ENCODE measurements at regions of chr6 and their contacts with region 1.

Region 1: GRCh38 chr6:138001750-138002349 is 105.4 kb downstream of the PERP start:
- DNase-seq: peak; percentile 48 to 74 (median 58)
- ATAC-seq: peak; percentile 60
- H3K4me3 ChIP-seq: no peak overlapping the region
- H3K27ac ChIP-seq: no peak overlapping the region
- H3K4me1 ChIP-seq: no peaks in the 10 kb centered on the region
- H3K27me3 ChIP-seq: peaks cover 4 to 7% of the 10 kb centered on the region in 2 experiments; a peak in 2 of 5 replicates
- CTCF ChIP-seq: peak; percentile 82 to 94 (median 86)
- EP300 ChIP-seq: no peak
- POLR2A ChIP-seq: no peak
- RAD21 ChIP-seq: peak; percentile 77 to 84

Region 2: GRCh38 chr6:137497721-137498463 is 504.0 kb before region 1 on chr6:
- CTCF ChIA-PET with region 1: no interaction called
- POLR2A ChIA-PET with region 1: no interaction called
- in situ Hi-C with region 1: no loop called
- intact Hi-C with region 1: loop called (anchors 10 kb)
- DNase-seq: no peak
- ATAC-seq: no peak
- H3K4me3 ChIP-seq: no peak overlapping the region
- H3K27ac ChIP-seq: no peak overlapping the region
- H3K4me1 ChIP-seq: peaks cover 0 to 10% of the 10 kb centered on the region in 2 experiments; a peak in 1 of 5 replicates
- H3K27me3 ChIP-seq: peaks cover 47 to 54% of the 10 kb centered on the region in 2 experiments
- CTCF ChIP-seq: no peak
- EP300 ChIP-seq: no peak
- POLR2A ChIP-seq: no peak
- RAD21 ChIP-seq: no peak

Region 3: GRCh38 chr6:137661601-137662000 is 340.2 kb before region 1 on chr6:
- CTCF ChIA-PET with region 1: no interaction called
- POLR2A ChIA-PET with region 1: interaction called, 3 read pairs
- in situ Hi-C with region 1: no loop called
- intact Hi-C with region 1: loop called (anchors 1 kb)
- DNase-seq: peak; percentile 16 to 35 (median 20)
- ATAC-seq: peak; percentile 65; the same call in 2 of the 3 replicates
- H3K4me3 ChIP-seq: no peak overlapping the region
- H3K27ac ChIP-seq: no peak overlapping the region
- H3K4me1 ChIP-seq: no peaks in the 10 kb centered on the region
- H3K27me3 ChIP-seq: peaks cover 0 to 5% of the 10 kb centered on the region in 2 experiments; a peak in 1 of 5 replicates
- CTCF ChIP-seq: peak; percentile 39 to 49 (median 41); a peak in 4 of 6 replicates
- EP300 ChIP-seq: no peak
- POLR2A ChIP-seq: no peak
- RAD21 ChIP-seq: peak in 1 of 2 experiments; percentile 54; a peak in 3 of 4 replicates

Region 4: GRCh38 chr6:137823826-137824555 is 177.9 kb before region 1 on chr6:
- CTCF ChIA-PET with region 1: no interaction called
- POLR2A ChIA-PET with region 1: no interaction called
- in situ Hi-C with region 1: no loop called
- intact Hi-C with region 1: no loop called
- DNase-seq: peak; percentile 31 to 64 (median 42)
- ATAC-seq: peak; percentile 79
- H3K4me3 ChIP-seq: no peak overlapping the region
- H3K27ac ChIP-seq: peak overlapping the region; percentile 1; the same call in 1 of the 3 replicates
- H3K4me1 ChIP-seq: peaks cover 2 to 22% of the 10 kb centered on the region in 2 experiments; a peak in 4 of 5 replicates
- H3K27me3 ChIP-seq: no peaks in the 10 kb centered on the region
- CTCF ChIP-seq: no peak
- EP300 ChIP-seq: no peak
- POLR2A ChIP-seq: no peak
- RAD21 ChIP-seq: no peak

Region 5: DNA sequence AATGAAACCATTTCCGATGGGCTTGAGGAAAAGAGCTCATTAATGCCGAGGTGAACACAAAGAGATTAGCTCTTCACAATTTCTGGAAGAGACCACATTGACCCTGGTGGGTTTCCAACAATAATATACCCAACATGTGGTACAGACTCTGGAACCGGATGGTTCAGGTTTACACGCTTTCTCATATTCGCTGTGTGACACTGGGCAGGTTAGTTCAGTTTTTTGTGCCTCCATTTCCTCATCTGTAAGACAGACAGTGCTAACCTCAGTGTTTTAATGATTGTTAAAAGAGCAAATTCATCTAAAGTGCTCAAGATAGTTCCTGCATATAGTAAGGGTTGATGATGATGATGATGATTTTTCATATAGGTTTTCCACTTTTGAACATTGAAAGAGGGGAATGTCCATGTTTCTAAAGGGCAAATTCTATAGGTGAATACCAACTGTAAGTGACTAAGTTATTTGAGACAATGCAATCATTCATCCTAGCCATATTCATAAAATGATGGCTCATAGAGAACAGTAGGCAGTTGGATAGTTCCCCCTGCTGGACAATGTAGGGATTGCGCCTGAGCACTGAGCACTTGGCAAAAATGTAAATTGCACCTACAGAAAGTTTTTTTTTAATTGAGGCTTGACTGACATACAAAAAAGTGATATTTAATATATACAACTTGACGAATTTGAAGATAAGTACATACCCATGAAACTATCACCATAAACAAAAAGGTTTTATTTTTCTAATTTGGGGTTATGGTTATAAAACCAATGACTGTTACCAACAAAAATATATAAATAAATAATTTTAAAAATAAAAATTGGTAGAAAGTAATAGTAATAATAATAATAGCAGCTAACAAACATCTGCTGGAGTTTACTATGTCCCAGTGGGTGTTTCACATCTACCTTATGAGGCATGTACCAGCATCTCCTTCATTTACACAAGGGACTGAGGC is 107.5 kb after region 1 on chr6:
- CTCF ChIA-PET with region 1: interaction called, 28 read pairs
- POLR2A ChIA-PET with region 1: interaction called, 3 read pairs
- in situ Hi-C with region 1: loop called (anchors 5 kb)
- intact Hi-C with region 1: loop called (anchors 1 kb)
- DNase-seq: peak; percentile 61 to 78 (median 64)
- ATAC-seq: peak; percentile 44; the same call in 2 of the 3 replicates
- H3K4me3 ChIP-seq: no peak overlapping the region
- H3K27ac ChIP-seq: no peak overlapping the region
- H3K4me1 ChIP-seq: peaks cover 0 to 12% of the 10 kb centered on the region in 2 experiments; a peak in 2 of 5 replicates
- H3K27me3 ChIP-seq: peaks cover 34 to 39% of the 10 kb centered on the region in 2 experiments
- CTCF ChIP-seq: peak; percentile 77 to 97 (median 93)
- EP300 ChIP-seq: no peak
- POLR2A ChIP-seq: no peak
- RAD21 ChIP-seq: peak; percentile 88 to 91

Region 6: DNA sequence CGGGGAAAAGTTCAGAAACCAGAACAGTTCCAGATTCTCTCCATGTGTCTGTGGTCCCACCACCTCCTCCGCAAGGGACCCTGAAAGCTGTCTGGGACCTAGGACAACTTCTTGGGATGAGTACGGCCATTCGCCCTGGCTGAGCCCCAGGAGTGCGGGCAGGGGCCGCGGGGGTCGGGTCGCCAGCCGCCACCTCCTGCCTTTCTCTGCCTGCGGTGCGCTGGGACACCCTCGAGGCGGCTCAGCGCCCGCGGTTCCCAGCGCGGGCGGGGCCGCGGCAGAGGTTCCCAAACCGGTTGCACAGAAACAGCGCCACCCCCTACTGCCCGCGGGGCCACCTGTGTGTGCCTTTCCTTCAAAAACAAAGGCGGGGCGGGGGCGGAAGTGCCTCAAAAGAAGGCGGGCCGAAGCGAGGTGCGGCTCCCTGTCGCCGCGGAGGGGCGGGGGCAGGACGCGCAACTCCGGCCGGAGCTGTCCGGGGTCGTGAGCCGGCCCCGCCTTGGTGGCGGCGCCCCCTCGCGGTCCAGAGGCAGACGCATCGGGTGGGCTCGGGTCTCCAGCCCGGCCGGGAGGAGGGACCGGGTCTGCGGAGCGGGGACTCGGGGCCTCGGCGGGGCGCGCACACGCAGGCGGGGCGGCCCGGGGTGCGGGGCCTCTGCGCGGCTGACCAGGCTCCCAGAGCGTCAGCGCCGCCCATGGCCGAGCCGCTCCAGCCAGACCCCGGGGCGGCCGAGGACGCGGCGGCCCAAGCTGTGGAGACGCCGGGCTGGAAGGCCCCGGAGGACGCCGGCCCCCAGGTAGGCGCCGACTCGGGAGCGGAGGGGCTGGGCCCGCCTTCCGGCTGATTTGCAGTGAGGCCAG is 402.2 kb after region 1 on chr6 and contains the start of gene HEBP2:
- CTCF ChIA-PET with region 1: no interaction called
- POLR2A ChIA-PET with region 1: no interaction called
- in situ Hi-C with region 1: no loop called
- intact Hi-C with region 1: loop called (anchors 5 kb)
- DNase-seq: peak; percentile 96 to 98 (median 98)
- ATAC-seq: peak; percentile 95
- H3K4me3 ChIP-seq: peak within 1 kb of the TSS; percentile 58
- H3K27ac ChIP-seq: peak within 1 kb of the TSS; percentile 87
- H3K4me1 ChIP-seq: peaks cover 10 to 23% of the 10 kb centered on the region in 2 experiments
- H3K27me3 ChIP-seq: no peaks in the 10 kb centered on the region
- CTCF ChIP-seq: peak; percentile 51 to 59 (median 53)
- EP300 ChIP-seq: peak; percentile 45; the same call in 1 of the 2 replicates
- POLR2A ChIP-seq: peak; percentile 88
- RAD21 ChIP-seq: peak; percentile 65 to 85
- polyA plus RNA-seq, gene HEBP2: 8.5 to 14.5 TPM